Transverse colon (tissue), 4 donors: ENCODE measurements at regions of chr13 and their contacts with region 1.

Region 1: DNA sequence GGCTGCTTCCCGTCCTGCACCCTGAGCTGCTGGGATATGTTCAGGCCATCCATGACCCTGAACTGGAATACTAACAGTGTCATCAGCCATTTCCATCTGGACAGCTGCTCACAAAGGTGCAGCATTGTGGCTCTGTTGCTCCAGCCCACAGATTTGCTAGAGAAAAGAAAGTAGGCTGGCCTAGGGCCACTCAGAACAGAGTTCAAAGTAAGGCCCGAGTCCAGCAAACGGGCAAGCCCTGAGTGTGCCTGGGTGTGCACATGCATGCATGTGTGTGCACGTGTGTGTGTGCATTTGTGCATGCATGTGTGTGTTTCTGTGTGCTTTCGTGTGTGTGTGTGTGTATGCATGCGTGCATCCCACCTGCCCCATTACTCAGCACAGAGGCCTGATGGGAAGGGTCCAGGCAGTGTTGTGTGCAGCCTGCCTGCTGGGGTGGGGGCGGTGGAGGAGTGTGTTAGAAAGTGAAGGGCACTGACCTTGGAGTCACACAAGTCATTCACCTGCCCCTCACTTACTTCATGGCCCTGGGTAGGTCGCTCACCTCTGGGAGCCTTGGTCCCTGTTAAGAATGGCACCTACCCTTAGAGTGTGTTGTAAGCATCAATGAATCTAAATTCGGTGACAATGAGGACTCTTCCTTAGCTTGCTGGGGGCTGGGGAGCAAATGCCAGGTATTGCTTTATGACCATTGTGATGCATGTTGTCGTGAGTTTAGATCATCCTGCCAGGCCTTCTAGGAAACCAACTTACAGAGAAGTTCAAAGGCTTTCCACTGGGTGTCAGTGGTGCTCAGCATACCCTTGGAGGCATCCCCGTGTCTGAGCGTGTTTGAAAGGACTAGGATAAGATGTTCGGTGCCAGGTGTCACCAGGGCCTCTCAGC is 53.2 kb downstream of the GPR12 start:
- DNase-seq: no peak
- H3K4me3 ChIP-seq: no peak overlapping the region
- H3K27ac ChIP-seq: no peak overlapping the region
- H3K4me1 ChIP-seq: no peaks in the 10 kb centered on the region
- H3K27me3 ChIP-seq: peaks cover 3% of the 10 kb centered on the region
- CTCF ChIP-seq: peak; percentile 26 to 56 (median 50)
- EP300 ChIP-seq: no peak
- POLR2A ChIP-seq: no peak

Region 2: DNA sequence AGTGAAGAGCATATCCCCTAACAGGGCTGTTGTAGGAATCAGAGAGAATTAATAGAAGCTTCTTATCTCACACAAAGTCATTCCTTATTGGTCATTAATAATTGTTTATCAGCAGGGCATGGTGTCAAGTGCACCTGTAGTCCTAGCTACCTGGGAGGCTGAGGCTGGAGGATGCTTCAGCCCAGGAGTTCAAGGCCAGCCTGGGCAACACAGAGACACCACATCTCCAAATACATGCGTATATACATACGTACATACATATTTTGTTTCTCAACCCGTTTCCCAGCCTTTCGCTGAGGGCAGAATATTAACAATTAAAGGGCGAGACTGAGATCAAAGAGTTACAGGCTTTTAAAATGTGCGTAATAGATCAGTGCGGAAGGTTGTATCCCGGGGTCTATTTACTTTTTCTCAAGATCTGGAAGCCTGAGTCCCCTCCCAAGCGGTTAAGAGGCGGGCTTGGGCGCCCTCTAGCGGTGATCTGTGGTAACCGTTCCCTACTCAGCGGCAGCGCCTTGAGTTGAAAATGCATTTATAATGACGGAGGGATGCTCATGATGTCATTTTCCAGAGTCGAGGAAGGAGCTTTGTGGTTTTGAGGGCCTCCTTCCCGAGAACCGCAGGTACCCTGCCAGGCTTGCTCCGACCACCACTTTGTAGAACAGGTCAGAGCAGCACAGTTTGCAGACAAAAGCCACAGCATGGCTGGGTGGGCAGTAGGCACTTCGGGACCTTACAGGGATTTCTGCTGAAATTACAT is 222.8 kb after region 1 on chr13:
- in situ Hi-C with region 1: loop called in 1 of 4 experiments (anchors 25 kb)
- intact Hi-C with region 1: no loop called
- DNase-seq: peak; percentile 72
- H3K4me3 ChIP-seq: no peak overlapping the region
- H3K27ac ChIP-seq: no peak overlapping the region
- H3K4me1 ChIP-seq: peaks cover 0 to 6% (median 2%) of the 10 kb centered on the region in 4 donors
- H3K27me3 ChIP-seq: no peaks in the 10 kb centered on the region
- CTCF ChIP-seq: peak; percentile 76 to 98 (median 96)
- EP300 ChIP-seq: no peak
- POLR2A ChIP-seq: no peak